RWPE1 (cell line): ENCODE measurements at regions of chr10 and their contacts with region 1.

Region 1: GRCh38 chr10:100433253-100434240 is 29.3 kb upstream of the WNT8B start:
- DNase-seq: peak; percentile 88
- H3K27ac ChIP-seq: no peak overlapping the region
- CTCF ChIP-seq: peak; percentile 98

Region 2: GRCh38 chr10:100338434-100339036 is 95.0 kb before region 1 on chr10:
- CTCF ChIA-PET with region 1: interaction called, 39 read pairs
- POLR2A ChIA-PET with region 1: no interaction called
- DNase-seq: peak; percentile 84
- H3K27ac ChIP-seq: no peak overlapping the region
- CTCF ChIP-seq: peak; percentile 93

Region 3: GRCh38 chr10:100346765-100347567 is 86.6 kb before region 1 on chr10 and contains the start of gene SCD:
- CTCF ChIA-PET with region 1: interaction called, 24 read pairs
- POLR2A ChIA-PET with region 1: interaction called, 3 read pairs
- DNase-seq: peak; percentile 97
- H3K27ac ChIP-seq: peak within 1 kb of the TSS; percentile 92
- CTCF ChIP-seq: no peak

Region 4: GRCh38 chr10:100391163-100392002 is 42.2 kb before region 1 on chr10:
- CTCF ChIA-PET with region 1: no interaction called
- POLR2A ChIA-PET with region 1: no interaction called
- DNase-seq: no peak
- H3K27ac ChIP-seq: no peak overlapping the region
- CTCF ChIP-seq: no peak

Region 5: GRCh38 chr10:100446130-100446761 is 12.7 kb after region 1 on chr10:
- CTCF ChIA-PET with region 1: no interaction called
- POLR2A ChIA-PET with region 1: no interaction called
- DNase-seq: no peak
- H3K27ac ChIP-seq: no peak overlapping the region
- CTCF ChIP-seq: no peak

Region 6: GRCh38 chr10:100508691-100509150 is 75.2 kb after region 1 on chr10:
- CTCF ChIA-PET with region 1: interaction called, 11 read pairs
- POLR2A ChIA-PET with region 1: no interaction called
- DNase-seq: peak; percentile 67
- H3K27ac ChIP-seq: no peak overlapping the region
- CTCF ChIP-seq: peak; percentile 62